Right ventricle myocardium inferior (tissue), 1 donor: ENCODE measurements at regions of chr12 and their contacts with region 1.

Region 1: GRCh38 chr12:131928711-131929580 is at the start of gene PUS1:
- DNase-seq: peak; percentile 95
- ATAC-seq: peak; percentile 96
- total RNA-seq, gene PUS1: 9.4 TPM

Region 2: GRCh38 chr12:131896080-131896810 is 32.7 kb before region 1 on chr12:
- intact Hi-C with region 1: loop called (anchors 1 kb)
- DNase-seq: peak; percentile 95
- ATAC-seq: peak; percentile 91

Region 3: DNA sequence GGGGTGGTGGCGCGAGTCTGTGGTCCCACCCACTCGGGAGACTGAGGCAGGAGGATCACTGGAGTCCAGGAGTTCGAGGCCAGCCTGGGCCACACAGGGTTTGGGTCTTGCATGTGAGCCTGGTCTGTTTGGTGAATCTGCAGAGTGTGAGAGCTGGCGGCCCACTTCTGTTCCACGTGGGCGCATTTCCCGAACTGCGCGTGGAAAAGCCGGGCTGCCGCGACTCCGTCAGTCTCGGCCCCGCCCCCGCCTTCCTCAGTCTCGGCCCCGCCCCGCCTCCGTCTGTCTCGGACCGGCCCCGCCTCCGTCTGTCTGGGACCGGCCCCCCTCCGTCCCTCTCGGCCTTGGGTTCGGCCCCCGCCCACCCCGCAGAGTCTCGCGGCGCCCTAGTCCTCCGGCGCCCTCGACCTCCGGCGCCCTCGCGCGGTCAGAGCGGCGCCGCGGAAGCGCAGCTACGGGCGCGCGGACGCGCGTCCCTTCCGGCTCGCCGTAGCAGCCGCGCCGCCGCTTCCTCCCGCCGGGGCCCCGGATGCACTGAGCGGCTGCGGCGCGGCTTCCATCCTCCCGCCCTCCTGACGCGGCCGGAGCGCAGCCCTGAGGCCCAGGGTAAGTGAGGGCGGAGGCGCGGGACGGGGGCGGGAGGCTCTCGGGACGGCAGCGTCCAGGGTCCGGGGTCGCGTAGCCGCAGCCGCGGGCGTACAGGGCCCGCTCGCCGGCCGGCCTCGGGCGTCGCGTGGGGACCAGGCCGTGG is 20.7 kb after region 1 on chr12 and contains the start of gene EP400:
- intact Hi-C with region 1: loop called (anchors 2 kb)
- DNase-seq: peak; percentile 98
- ATAC-seq: peak; percentile 99
- total RNA-seq, gene EP400: 13.9 TPM